ENCODE measurements at regions of chr9 and their contacts with region 1.

Region 1: GRCh38 chr9:127199001-127199791 is 65.4 kb upstream of the GARNL3 start:
- H3K4me3 ChIP-seq: no peak overlapping the region
- H3K27ac ChIP-seq: no peak overlapping the region
- H3K4me1 ChIP-seq: no peaks in the 10 kb centered on the region
- CTCF ChIP-seq: peak; percentile 72

Region 2: GRCh38 chr9:126965541-126966428 is 233.4 kb before region 1 on chr9:
- CTCF ChIA-PET with region 1: interaction called, 70 read pairs
- POLR2A ChIA-PET with region 1: no interaction called
- H3K4me3 ChIP-seq: no peak overlapping the region
- H3K27ac ChIP-seq: no peak overlapping the region
- H3K4me1 ChIP-seq: no peaks in the 10 kb centered on the region
- CTCF ChIP-seq: peak; percentile 49

Region 3: GRCh38 chr9:127178686-127179632 is 20.2 kb before region 1 on chr9:
- CTCF ChIA-PET with region 1: no interaction called
- POLR2A ChIA-PET with region 1: no interaction called
- H3K4me3 ChIP-seq: no peak overlapping the region
- H3K27ac ChIP-seq: no peak overlapping the region
- H3K4me1 ChIP-seq: no peaks in the 10 kb centered on the region
- CTCF ChIP-seq: no peak

Region 4: GRCh38 chr9:127388037-127388855 is 189.1 kb after region 1 on chr9:
- CTCF ChIA-PET with region 1: no interaction called
- POLR2A ChIA-PET with region 1: no interaction called
- H3K4me3 ChIP-seq: no peak overlapping the region
- H3K27ac ChIP-seq: peak overlapping the region; percentile 53
- H3K4me1 ChIP-seq: peaks cover 12% of the 10 kb centered on the region
- CTCF ChIP-seq: no peak